CD4-positive, alpha-beta T cell (primary cell): ENCODE measurements at regions of chr14 and their contacts with region 1.

Region 1: DNA sequence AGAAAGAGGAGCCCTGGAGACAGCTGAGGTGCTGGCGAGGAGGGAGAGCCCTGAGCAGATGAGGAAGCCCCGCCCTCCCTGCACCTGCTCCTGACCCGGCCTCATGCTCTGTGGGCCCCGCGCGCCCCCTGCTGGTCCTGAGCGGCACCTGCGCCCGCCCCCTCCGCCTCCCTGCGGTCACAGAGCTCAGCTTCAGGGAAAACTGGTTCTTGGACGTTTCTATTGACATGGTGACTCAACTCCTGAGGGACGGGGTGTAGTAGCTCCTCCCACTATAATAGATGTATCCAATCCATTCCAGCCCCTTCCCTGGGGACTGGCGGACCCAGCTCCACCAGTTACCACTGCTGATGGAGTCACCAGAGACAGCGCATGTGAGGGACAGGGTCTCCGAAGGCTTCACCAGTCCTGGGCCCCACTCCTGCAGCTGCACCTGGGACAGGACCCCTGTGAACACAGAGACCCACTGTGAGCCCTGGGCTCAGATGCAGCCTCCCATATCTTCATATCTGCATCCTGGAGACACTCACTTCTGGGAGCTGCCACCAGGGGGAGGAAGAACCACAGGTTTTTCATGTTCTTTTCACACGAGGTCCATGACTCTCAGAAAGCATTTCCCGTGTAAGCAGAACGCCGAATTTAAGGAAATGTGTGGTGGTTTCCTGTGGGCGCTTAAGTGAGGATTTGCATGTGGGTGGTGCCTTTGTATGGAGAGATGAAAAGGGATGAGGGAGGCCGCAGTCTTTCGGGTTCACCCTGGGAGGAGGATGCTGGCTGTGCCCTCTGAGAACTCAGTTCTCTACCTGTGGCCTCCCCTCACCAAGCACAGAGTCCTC is 1346.4 kb downstream of the TMEM121 start:
- DNase-seq: peak; percentile 68 to 87 (median 80)
- ATAC-seq: peak; percentile 80
- H3K4me3 ChIP-seq: peak overlapping the region; percentile 22
- H3K4me3 Mint-ChIP-seq: peak overlapping the region; percentile 51
- H3K27ac ChIP-seq: no peak overlapping the region
- H3K27ac Mint-ChIP-seq: no peak overlapping the region
- H3K4me1 ChIP-seq: peaks cover 19% of the 10 kb centered on the region
- H3K4me1 Mint-ChIP-seq: peaks cover 23% of the 10 kb centered on the region
- H3K27me3 ChIP-seq: peaks cover 14% of the 10 kb centered on the region in 2 experiments
- H3K27me3 Mint-ChIP-seq: peaks cover 42% of the 10 kb centered on the region
- CTCF ChIP-seq: peak; percentile 81

Region 2: GRCh38 chr14:105917933-105918436 is 954.8 kb before region 1 on chr14:
- CTCF ChIA-PET with region 1: no interaction called
- POLR2A ChIA-PET with region 1: no interaction called
- intact Hi-C with region 1: no loop called
- DNase-seq: no peak
- ATAC-seq: no peak
- H3K4me3 ChIP-seq: no peak overlapping the region
- H3K4me3 Mint-ChIP-seq: no peak overlapping the region
- H3K27ac ChIP-seq: no peak overlapping the region
- H3K27ac Mint-ChIP-seq: no peak overlapping the region
- H3K4me1 ChIP-seq: no peaks in the 10 kb centered on the region
- H3K4me1 Mint-ChIP-seq: no peaks in the 10 kb centered on the region
- H3K27me3 ChIP-seq: peaks cover 0 to 4% of the 10 kb centered on the region in 2 experiments
- H3K27me3 Mint-ChIP-seq: peaks cover 10% of the 10 kb centered on the region
- CTCF ChIP-seq: no peak

Region 3: DNA sequence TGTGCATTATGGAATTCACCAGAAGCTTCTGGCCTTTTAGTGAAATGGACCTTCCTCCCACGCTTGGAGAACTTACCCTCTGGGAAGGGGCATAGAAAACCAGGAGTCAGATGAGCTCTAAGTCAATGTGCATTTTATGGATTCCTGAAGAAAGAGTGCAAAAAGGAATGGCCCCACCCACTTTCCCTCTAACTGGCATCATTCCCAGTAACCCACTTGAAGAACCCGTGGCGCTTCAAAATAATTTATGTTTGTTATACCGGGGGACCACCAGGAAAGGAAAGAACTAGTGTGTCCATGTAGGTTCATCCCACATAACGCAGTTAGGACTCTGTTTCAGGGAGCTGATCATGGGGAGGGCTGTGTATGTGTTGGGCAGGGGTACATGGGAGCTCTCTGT is 193.1 kb before region 1 on chr14:
- CTCF ChIA-PET with region 1: no interaction called
- POLR2A ChIA-PET with region 1: no interaction called
- intact Hi-C with region 1: no loop called
- DNase-seq: no peak
- ATAC-seq: no peak
- H3K4me3 ChIP-seq: no peak overlapping the region
- H3K4me3 Mint-ChIP-seq: no peak overlapping the region
- H3K27ac ChIP-seq: no peak overlapping the region
- H3K27ac Mint-ChIP-seq: no peak overlapping the region
- H3K4me1 ChIP-seq: peaks cover under 1% of the 10 kb centered on the region
- H3K4me1 Mint-ChIP-seq: no peaks in the 10 kb centered on the region
- H3K27me3 ChIP-seq: peaks cover 0 to 6% of the 10 kb centered on the region in 2 experiments
- H3K27me3 Mint-ChIP-seq: no peaks in the 10 kb centered on the region
- CTCF ChIP-seq: no peak

Region 4: GRCh38 chr14:106776395-106776983 is 96.3 kb before region 1 on chr14:
- CTCF ChIA-PET with region 1: no interaction called
- POLR2A ChIA-PET with region 1: no interaction called
- intact Hi-C with region 1: no loop called
- DNase-seq: no peak
- ATAC-seq: no peak
- H3K4me3 ChIP-seq: no peak overlapping the region
- H3K4me3 Mint-ChIP-seq: no peak overlapping the region
- H3K27ac ChIP-seq: no peak overlapping the region
- H3K27ac Mint-ChIP-seq: no peak overlapping the region
- H3K4me1 ChIP-seq: peaks cover 9% of the 10 kb centered on the region
- H3K4me1 Mint-ChIP-seq: peaks cover 11% of the 10 kb centered on the region
- H3K27me3 ChIP-seq: no peaks in the 10 kb centered on the region
- H3K27me3 Mint-ChIP-seq: no peaks in the 10 kb centered on the region
- CTCF ChIP-seq: no peak

Region 5: GRCh38 chr14:106790189-106791036 is 82.4 kb before region 1 on chr14:
- CTCF ChIA-PET with region 1: interaction called, 13 read pairs
- POLR2A ChIA-PET with region 1: no interaction called
- intact Hi-C with region 1: no loop called
- DNase-seq: peak; percentile 52 to 86 (median 66)
- ATAC-seq: peak; percentile 69
- H3K4me3 ChIP-seq: no peak overlapping the region
- H3K4me3 Mint-ChIP-seq: no peak overlapping the region
- H3K27ac ChIP-seq: no peak overlapping the region
- H3K27ac Mint-ChIP-seq: no peak overlapping the region
- H3K4me1 ChIP-seq: peaks cover 9% of the 10 kb centered on the region
- H3K4me1 Mint-ChIP-seq: peaks cover 16% of the 10 kb centered on the region
- H3K27me3 ChIP-seq: no peaks in the 10 kb centered on the region
- H3K27me3 Mint-ChIP-seq: peaks cover 10% of the 10 kb centered on the region
- CTCF ChIP-seq: peak; percentile 90

Region 6: GRCh38 chr14:106844608-106845285 is 28.1 kb before region 1 on chr14:
- CTCF ChIA-PET with region 1: interaction called, 42 read pairs
- POLR2A ChIA-PET with region 1: no interaction called
- intact Hi-C with region 1: loop called (anchors 2 kb)
- DNase-seq: peak; percentile 47 to 87 (median 62)
- ATAC-seq: peak; percentile 80
- H3K4me3 ChIP-seq: peak overlapping the region; percentile 90
- H3K4me3 Mint-ChIP-seq: peak overlapping the region; percentile 96
- H3K27ac ChIP-seq: peak overlapping the region; percentile 81 to 82
- H3K27ac Mint-ChIP-seq: peak overlapping the region; percentile 52
- H3K4me1 ChIP-seq: peaks cover 19% of the 10 kb centered on the region
- H3K4me1 Mint-ChIP-seq: peaks cover 46% of the 10 kb centered on the region
- H3K27me3 ChIP-seq: no peaks in the 10 kb centered on the region
- H3K27me3 Mint-ChIP-seq: no peaks in the 10 kb centered on the region
- CTCF ChIP-seq: no peak